Ovary (tissue), 10 donors: ENCODE measurements at regions of chr11 and their contacts with region 1.

Region 1: DNA sequence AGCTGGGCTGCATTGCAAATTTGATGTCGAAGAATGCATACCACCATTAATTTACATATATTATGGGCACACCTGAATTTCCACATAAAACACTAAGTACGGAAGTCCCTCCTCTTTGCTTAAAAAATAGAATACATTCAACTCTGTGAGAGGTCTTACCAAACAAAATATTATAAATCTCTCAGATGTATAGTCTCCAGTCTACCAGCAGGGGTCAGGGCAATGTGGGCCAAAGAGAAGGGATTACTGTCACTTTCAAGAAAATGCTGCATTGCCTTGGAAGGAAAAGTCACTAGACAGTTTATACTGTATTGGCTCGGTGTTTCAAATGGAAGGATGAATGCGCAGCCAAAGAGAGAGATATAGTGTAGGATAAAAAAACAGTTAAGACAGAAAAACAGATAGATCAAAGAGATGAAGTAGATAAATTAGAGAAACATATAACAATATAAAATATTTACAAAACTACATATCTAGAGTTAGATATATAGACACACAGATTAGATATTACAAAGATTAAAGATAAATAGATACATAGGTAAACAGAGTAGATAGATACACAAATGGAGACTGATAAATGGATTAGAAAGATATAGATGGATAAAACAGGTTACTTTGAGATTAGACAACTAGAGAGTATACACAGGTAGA is 20.9 kb downstream of the SERGEF start:
- DNase-seq: peak in 3 of 5 donors; percentile 17 to 44 (median 35)
- H3K4me3 ChIP-seq: no peak overlapping the region
- H3K27ac ChIP-seq: no peak overlapping the region
- H3K4me1 ChIP-seq: no peaks in the 10 kb centered on the region
- H3K27me3 ChIP-seq: no peaks in the 10 kb centered on the region
- CTCF ChIP-seq: peak; percentile 33 to 58 (median 52)
- EP300 ChIP-seq: no peak
- POLR2A ChIP-seq: no peak

Region 2: GRCh38 chr11:17384002-17384511 is 607.9 kb before region 1 on chr11:
- intact Hi-C with region 1: loop called in 1 of 4 experiments (anchors 5 kb)
- DNase-seq: peak; percentile 65 to 83 (median 79)
- H3K4me3 ChIP-seq: no peak overlapping the region
- H3K27ac ChIP-seq: no peak overlapping the region
- H3K4me1 ChIP-seq: peaks cover 3% of the 10 kb centered on the region
- H3K27me3 ChIP-seq: no peaks in the 10 kb centered on the region
- CTCF ChIP-seq: peak; percentile 58 to 75 (median 75)
- EP300 ChIP-seq: no peak
- POLR2A ChIP-seq: no peak